ENCODE measurements at regions of chr11 and their contacts with region 1.

Region 1: GRCh38 chr11:1521382-1522080 is 35.0 kb upstream of the MOB2 start:
- DNase-seq: peak; percentile 79
- ATAC-seq: peak; percentile 94
- H3K4me3 Mint-ChIP-seq: peak overlapping the region; percentile 76
- H3K27ac Mint-ChIP-seq: peak overlapping the region; percentile 74
- H3K4me1 Mint-ChIP-seq: peaks cover 68% of the 10 kb centered on the region
- H3K27me3 Mint-ChIP-seq: no peaks in the 10 kb centered on the region
- CTCF ChIP-seq: no peak

Region 2: DNA sequence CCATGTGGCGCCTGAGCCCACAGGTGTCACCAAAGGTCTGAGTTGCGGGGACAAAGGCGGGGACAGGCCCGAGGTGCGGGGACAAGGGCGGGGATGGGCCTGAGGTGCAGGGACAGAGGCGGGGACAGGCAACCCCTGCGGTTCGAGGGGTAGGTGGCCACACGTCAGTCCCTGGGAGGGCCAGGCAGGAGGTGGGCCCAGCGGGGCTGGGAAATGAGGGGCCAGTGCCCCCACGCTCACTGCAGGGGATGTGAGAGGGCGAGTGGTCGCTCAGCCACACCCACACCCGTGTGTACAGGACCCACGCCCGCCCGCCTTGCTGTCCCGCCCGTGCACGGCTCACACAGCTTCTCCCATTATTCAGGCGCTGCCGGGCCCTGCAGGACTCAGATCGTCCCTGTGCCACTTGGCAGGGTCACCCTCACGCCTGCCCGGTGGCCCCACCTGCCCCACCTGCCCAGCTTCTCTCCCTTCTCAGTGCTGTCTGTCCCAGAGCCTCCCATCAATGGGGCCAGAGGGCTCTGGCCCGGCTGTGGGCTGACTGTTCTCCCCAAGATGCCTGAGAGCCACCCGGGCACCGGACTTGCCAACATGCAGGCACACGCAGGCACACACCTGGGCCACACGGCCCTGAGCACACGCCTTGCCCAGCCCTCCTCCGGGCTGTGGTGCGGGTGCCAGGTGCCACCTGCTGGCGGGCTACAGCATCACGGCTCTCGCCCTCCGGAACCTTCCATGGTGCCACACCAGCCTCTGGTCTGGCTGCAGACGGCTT is 470.8 kb before region 1 on chr11:
- CTCF ChIA-PET with region 1: no interaction called
- POLR2A ChIA-PET with region 1: no interaction called
- intact Hi-C with region 1: no loop called
- DNase-seq: peak; percentile 63
- ATAC-seq: peak; percentile 100
- H3K4me3 Mint-ChIP-seq: no peak overlapping the region
- H3K27ac Mint-ChIP-seq: no peak overlapping the region
- H3K4me1 Mint-ChIP-seq: no peaks in the 10 kb centered on the region
- H3K27me3 Mint-ChIP-seq: peaks cover 12% of the 10 kb centered on the region
- CTCF ChIP-seq: no peak

Region 3: DNA sequence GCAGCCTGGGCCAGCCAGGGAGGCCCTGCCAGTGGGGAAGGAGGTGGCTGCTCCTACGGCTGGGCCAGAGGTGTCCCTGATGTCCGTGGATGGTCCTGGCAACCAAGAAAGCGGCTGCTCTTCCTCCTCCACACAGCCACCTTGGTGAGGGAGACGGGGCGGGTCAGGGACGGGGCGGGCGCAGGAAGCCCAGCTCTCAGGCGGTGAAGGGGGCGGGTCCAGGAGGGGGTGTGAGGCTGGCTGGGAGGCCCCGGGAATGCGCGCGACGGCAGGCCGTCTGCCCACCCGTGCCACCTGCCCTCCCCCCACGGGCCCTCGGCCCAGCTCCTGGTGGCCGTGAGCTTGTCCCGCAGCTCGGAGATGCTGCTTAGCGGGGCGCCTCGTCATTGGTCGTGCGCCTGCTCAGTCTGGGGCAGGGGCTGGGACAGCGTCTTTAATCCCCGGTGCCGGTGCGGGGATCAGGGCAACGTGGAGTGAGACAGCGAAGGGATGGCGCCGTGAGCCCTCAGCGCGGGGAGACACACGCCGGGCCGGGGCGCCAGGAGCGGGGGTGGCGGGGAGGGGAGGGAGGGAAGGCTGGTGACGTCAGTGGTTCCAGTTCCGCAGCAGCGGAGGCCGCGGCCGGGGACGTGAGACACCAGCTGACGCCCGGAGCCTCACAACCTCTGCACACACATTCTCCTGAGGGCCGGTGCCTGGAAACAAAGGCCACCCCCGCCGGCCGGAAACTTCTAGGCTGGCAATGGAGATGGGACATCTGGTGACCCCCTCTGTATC is 138.5 kb before region 1 on chr11:
- CTCF ChIA-PET with region 1: no interaction called
- POLR2A ChIA-PET with region 1: no interaction called
- intact Hi-C with region 1: loop called (anchors 5 kb)
- DNase-seq: peak; percentile 68
- ATAC-seq: peak; percentile 74
- H3K4me3 Mint-ChIP-seq: peak overlapping the region; percentile 85
- H3K27ac Mint-ChIP-seq: peak overlapping the region; percentile 91
- H3K4me1 Mint-ChIP-seq: peaks cover 31% of the 10 kb centered on the region
- H3K27me3 Mint-ChIP-seq: peaks cover 1% of the 10 kb centered on the region
- CTCF ChIP-seq: no peak

Region 4: DNA sequence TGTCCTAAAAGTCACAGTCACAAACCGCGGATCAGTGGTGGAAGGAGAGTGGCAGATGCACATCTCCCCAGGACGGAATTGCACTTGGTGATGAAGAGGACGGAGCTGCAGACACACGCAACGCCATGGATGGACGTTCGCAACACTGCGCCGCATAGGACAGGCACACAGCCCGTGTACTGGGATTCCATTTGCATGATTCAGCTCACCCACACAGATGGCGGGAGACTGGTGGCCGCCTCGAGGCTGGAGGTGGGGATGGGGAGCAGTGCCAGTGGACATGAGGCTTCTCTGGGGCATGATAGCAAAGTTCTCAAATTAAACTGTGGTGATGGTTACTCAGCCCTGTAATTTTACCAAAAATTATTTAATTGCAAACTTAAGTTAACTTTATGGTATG is 13.2 kb after region 1 on chr11:
- CTCF ChIA-PET with region 1: no interaction called
- POLR2A ChIA-PET with region 1: interaction called, 3 read pairs
- intact Hi-C with region 1: loop called (anchors 2 kb)
- DNase-seq: no peak
- ATAC-seq: no peak
- H3K4me3 Mint-ChIP-seq: no peak overlapping the region
- H3K27ac Mint-ChIP-seq: no peak overlapping the region
- H3K4me1 Mint-ChIP-seq: peaks cover 21% of the 10 kb centered on the region
- H3K27me3 Mint-ChIP-seq: peaks cover 10% of the 10 kb centered on the region
- CTCF ChIP-seq: no peak

Region 5: DNA sequence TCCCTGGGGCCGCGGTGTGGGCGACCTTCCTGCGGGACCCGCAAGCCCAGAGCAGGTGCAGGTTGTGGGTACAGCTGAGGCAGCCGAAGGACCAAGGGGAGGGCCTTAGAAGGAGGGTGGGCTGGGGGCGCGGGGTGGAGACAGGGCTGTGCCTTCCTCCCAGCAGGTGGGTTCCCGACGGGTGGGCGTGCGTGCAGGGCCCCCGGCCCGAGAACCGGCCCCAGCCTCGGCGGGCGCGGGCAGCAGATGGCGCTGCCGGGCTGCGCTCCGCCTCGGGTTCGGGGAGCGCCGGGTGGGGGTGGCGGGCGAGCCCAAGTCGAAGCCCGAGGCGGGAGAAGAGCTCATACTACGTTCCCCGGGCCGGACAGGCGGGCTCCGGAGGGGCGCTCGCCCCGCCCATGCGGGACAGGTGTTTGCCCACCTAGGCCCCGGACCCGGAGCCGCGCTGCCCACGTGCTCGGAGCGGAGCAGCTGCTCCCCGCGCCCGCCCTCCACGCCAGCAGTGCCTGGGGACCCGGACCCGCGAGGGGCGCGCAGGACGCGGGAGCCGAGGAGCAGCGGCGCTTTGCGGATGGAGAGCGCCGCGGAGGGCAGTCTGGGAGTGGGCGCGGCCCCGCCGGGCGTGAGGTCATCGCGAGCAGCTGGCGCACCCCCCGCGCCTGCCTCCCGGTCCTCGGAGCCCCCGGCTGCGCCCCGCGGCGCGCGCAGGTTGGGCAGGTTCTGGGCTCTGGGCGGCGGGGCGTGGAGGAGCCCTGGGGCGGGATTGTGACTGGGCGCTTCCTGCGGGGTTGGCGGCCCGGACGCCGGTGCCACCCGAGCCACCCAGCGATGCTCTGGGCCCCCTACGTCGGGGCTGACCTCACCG is 25.2 kb after region 1 on chr11:
- CTCF ChIA-PET with region 1: no interaction called
- POLR2A ChIA-PET with region 1: no interaction called
- intact Hi-C with region 1: loop called (anchors 1 kb)
- DNase-seq: peak; percentile 50
- ATAC-seq: peak; percentile 67
- H3K4me3 Mint-ChIP-seq: peak overlapping the region; percentile 19
- H3K27ac Mint-ChIP-seq: no peak overlapping the region
- H3K4me1 Mint-ChIP-seq: peaks cover 13% of the 10 kb centered on the region
- H3K27me3 Mint-ChIP-seq: peaks cover 28% of the 10 kb centered on the region
- CTCF ChIP-seq: no peak

Measured in activated B cell treated with CpG ODN at 0.5 μM for 24 hours (primary cell).